Ascending aorta (tissue), 2 donors: ENCODE measurements at regions of chr2 and their contacts with region 1.

Region 1: DNA sequence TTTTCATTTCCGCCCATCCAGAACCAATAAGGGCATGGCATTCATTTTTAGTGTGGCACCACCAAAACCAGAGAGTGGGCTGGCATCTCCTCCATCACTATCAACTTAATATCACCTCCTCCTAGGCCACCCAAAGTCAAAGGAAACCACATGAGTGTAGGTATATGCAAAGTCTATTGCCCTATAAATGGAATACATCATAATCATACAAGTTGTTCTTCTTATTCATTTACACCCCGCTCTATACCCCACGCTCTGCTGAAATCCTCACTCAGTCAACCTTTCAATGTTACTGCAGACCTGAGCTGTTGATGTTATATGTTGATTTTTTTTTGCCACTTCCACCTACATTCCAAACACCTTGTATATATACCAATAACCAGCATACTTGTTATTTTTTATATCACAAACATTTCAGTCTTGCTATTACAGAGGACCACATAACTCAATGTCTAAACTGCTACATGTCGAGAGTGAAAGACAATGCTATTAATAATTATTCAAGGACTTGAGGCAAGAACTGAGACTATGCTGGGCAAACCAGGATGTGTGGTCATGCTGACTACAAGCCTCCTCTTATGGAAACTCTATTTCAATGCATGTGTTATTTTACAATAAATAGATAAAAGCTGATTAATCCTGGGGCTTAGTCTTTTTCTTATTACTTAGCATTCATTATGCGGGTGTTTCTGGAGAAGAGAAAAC is 466.5 kb upstream of the ID2 start:
- DNase-seq: no peak
- H3K4me3 ChIP-seq: no peak overlapping the region
- H3K27ac ChIP-seq: no peak overlapping the region
- H3K4me1 ChIP-seq: peaks cover 1 to 4% of the 10 kb centered on the region in 2 donors
- H3K27me3 ChIP-seq: no peaks in the 10 kb centered on the region
- CTCF ChIP-seq: no peak

Region 2: GRCh38 chr2:8004250-8004681 is 211.0 kb before region 1 on chr2:
- intact Hi-C with region 1: loop called (anchors 5 kb)
- DNase-seq: peak in 1 of 2 donors; percentile 77
- H3K4me3 ChIP-seq: peak overlapping the region; percentile 32 to 48
- H3K27ac ChIP-seq: peak overlapping the region; percentile 77 to 88
- H3K4me1 ChIP-seq: peaks cover 3 to 4% of the 10 kb centered on the region in 2 donors
- H3K27me3 ChIP-seq: no peaks in the 10 kb centered on the region
- CTCF ChIP-seq: no peak

Region 3: DNA sequence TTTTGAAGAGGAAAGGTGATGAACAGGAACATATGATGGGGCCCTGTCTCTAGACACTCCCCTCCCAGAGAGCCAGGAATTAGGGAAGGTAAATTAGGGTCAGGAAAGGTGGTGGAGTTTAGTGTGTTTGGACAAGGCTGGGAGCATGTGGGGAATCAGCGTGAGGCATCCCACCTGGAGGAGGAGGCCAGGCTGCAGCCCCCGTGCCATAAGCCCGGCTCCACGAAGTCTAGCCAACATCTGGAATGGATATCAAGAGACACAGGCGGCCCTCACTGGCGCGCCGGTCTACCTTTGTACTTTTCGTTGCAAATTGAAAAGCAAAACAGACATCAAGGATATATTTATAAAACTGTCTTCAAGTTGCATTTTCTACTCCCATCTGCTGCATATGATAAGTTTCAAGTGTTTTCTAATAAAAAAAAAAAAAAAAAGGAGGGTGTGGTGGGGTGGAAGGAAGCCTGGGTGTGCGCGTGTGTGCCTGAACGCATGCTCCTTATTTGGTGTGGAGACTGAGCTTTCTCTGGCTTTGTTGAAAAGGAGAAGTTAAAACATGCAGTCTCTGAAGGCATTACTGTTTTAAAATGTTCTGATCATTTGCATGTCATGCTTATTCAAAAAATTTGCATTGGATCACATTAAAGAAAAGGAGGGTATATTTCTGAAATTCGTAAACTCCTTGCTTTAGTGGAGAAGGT is 80.2 kb before region 1 on chr2:
- intact Hi-C with region 1: loop called (anchors 1 kb)
- DNase-seq: no peak
- H3K4me3 ChIP-seq: no peak overlapping the region
- H3K27ac ChIP-seq: no peak overlapping the region
- H3K4me1 ChIP-seq: peaks cover 3 to 14% of the 10 kb centered on the region in 2 donors
- H3K27me3 ChIP-seq: no peaks in the 10 kb centered on the region
- CTCF ChIP-seq: no peak

Region 4: GRCh38 chr2:8169443-8169842 is 45.9 kb before region 1 on chr2:
- intact Hi-C with region 1: loop called (anchors 5 kb)
- DNase-seq: no peak
- H3K4me3 ChIP-seq: no peak overlapping the region
- H3K27ac ChIP-seq: peak overlapping the region; percentile 28 to 63
- H3K4me1 ChIP-seq: peaks cover 0 to 7% of the 10 kb centered on the region in 2 donors
- H3K27me3 ChIP-seq: no peaks in the 10 kb centered on the region
- CTCF ChIP-seq: no peak

Region 5: DNA sequence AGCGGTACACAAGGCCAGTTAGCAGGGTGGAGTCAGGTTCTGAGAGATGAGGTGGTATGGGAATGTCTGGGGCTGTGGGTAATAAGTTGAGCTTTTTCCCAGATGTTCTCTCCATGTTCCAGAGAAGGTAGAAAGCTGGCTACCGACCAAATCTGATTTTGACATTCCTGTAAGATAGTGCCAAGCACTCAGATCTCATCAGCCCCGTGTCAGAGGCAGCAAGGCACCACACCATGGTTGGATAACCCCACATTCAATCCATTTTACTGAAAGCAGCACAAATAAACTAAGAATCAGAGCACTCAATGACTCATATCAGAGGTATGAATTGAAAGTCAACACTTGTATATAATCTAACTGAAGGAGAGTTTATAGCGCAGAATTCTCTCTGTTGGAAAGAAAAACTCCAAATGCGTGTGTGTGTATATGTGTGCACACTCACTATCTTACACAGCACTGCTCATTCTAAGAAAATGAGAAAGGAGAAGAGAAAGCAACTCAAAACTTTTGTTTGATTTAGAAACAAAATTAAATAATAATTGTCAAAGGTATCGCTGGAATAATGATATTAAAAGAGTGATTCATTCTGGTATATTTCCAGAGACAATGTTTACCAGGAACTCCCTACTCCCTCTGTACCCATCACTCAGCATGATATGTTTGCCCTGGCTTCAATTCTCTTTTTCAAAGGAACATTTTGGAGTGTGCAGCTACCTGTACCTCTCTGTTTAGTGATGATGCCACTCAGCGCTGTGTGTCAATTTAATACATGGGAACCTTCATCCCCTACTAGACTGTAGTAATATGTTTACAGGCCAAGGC is 91.4 kb after region 1 on chr2:
- intact Hi-C with region 1: loop called (anchors 5 kb)
- DNase-seq: peak in 1 of 2 donors; percentile 42
- H3K4me3 ChIP-seq: no peak overlapping the region
- H3K27ac ChIP-seq: peak overlapping the region; percentile 69 to 82
- H3K4me1 ChIP-seq: peaks cover 0 to 24% of the 10 kb centered on the region in 2 donors
- H3K27me3 ChIP-seq: no peaks in the 10 kb centered on the region
- CTCF ChIP-seq: no peak

Region 6: DNA sequence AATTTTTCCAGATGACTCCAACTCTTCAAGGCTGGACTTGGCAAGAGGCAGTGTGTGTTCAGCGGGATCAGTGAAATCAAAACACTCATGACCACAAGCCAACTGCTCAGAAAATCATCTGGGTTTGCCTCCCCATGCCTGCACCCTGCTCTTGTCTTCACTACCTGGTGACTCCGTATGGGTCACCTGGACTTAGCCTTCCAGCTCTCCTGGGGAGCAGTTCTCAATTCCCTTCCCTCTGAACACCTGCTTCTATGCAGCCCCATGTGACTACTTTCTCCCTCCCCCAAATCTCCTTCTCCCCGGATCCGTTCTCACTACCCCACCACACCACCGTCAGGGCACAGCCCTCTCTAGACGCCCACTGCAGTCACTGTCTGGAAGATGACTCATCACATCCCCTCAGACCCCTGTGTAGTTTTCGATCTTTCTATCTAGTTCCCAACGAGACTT is 336.3 kb after region 1 on chr2:
- intact Hi-C with region 1: no loop called
- DNase-seq: no peak
- H3K4me3 ChIP-seq: no peak overlapping the region
- H3K27ac ChIP-seq: no peak overlapping the region
- H3K4me1 ChIP-seq: no peaks in the 10 kb centered on the region
- H3K27me3 ChIP-seq: no peaks in the 10 kb centered on the region
- CTCF ChIP-seq: no peak

Region 7: DNA sequence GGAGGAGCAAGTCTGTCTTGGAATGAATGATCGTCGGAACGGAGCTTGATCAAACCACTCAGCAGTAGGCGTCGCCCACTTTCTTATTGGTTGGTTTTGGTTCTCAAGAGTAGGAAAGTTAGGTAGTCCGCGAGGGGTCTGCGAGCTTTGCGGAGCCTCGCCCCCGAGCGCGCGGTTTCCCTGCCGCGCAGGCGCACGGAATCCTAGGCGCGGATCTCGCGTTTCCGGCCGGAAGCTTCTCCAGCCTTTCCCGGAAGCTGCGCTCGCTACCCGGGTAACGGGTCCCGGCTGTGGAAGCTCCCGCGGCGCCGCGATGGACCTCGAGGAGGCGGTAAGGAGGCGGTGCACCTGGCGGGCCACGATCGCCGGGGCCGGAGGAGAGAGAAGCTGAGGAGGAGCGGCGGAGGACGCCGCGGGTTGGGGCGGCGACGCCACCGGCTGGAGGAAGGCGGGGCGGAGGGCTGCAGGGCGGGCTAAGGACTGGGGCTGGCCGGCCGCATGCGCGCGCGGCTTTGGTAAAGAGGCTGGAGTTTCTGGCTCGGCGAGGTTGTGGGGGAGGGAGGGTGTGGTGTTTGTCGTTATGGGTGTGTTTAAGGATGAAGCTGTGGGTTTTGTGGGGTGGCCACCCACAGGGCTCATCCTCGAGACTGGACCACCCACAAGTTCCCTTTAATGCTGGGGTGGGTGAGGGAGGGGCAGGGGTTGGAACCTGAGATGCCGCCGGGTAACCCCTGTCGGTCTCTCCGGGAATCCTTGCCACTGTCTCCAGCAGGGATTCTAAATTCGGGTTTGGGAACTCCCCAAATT is 1628.1 kb after region 1 on chr2 and contains the start of gene TAF1B:
- intact Hi-C with region 1: no loop called
- DNase-seq: peak in 1 of 2 donors; percentile 87
- H3K4me3 ChIP-seq: peak within 1 kb of the TSS; percentile 92 to 93
- H3K27ac ChIP-seq: peak within 1 kb of the TSS; percentile 87 to 88
- H3K4me1 ChIP-seq: peaks cover 6 to 9% of the 10 kb centered on the region in 2 donors
- H3K27me3 ChIP-seq: no peaks in the 10 kb centered on the region
- CTCF ChIP-seq: peak in 1 of 3 experiments; percentile 11
- total RNA-seq, gene TAF1B: 58.5 TPM